Ovary (tissue), 10 donors: ENCODE measurements at regions of chr22 and their contacts with region 1.

Region 1: GRCh38 chr22:45473691-45474491 is 28.8 kb upstream of the FBLN1 start:
- DNase-seq: peak in 4 of 5 donors; percentile 11 to 58 (median 41)
- H3K4me3 ChIP-seq: no peak overlapping the region
- H3K27ac ChIP-seq: no peak overlapping the region
- H3K4me1 ChIP-seq: peaks cover 7% of the 10 kb centered on the region
- H3K27me3 ChIP-seq: no peaks in the 10 kb centered on the region
- CTCF ChIP-seq: no peak
- EP300 ChIP-seq: no peak
- POLR2A ChIP-seq: no peak

Region 2: GRCh38 chr22:43862074-43862881 is 1611.6 kb before region 1 on chr22 and contains the start of gene SULT4A1:
- intact Hi-C with region 1: no loop called
- DNase-seq: peak in 3 of 5 donors; percentile 29 to 59 (median 47)
- H3K4me3 ChIP-seq: no peak within 1 kb of the TSS
- H3K27ac ChIP-seq: no peak within 1 kb of the TSS
- H3K4me1 ChIP-seq: no peaks in the 10 kb centered on the region
- H3K27me3 ChIP-seq: no peaks in the 10 kb centered on the region
- CTCF ChIP-seq: no peak
- EP300 ChIP-seq: no peak
- POLR2A ChIP-seq: no peak
- total RNA-seq, gene SULT4A1: 0.36 to 3.5 (median 1.8) TPM

Region 3: DNA sequence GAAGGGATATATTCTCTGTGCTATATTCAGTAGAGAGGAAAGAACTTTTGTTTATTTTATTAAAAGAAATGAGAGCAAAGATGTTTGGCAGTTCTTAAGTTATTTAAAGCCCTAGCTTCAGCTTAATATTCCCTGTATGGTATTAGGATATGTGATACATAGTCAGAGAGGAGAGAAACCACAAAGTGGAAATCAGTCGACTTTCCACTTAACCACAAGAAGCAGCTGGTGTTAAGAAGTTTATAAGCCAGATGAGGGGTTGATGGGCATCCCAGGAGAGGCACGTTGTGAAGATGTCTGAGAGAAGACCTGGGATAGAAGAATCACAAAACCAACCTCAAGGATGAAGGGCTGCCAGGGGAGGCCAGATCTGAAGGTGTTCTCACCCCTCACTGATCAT is 440.8 kb before region 1 on chr22:
- intact Hi-C with region 1: no loop called
- DNase-seq: no peak
- H3K4me3 ChIP-seq: no peak overlapping the region
- H3K27ac ChIP-seq: no peak overlapping the region
- H3K4me1 ChIP-seq: peaks cover 13% of the 10 kb centered on the region
- H3K27me3 ChIP-seq: no peaks in the 10 kb centered on the region
- CTCF ChIP-seq: no peak
- EP300 ChIP-seq: no peak
- POLR2A ChIP-seq: no peak

Region 4: DNA sequence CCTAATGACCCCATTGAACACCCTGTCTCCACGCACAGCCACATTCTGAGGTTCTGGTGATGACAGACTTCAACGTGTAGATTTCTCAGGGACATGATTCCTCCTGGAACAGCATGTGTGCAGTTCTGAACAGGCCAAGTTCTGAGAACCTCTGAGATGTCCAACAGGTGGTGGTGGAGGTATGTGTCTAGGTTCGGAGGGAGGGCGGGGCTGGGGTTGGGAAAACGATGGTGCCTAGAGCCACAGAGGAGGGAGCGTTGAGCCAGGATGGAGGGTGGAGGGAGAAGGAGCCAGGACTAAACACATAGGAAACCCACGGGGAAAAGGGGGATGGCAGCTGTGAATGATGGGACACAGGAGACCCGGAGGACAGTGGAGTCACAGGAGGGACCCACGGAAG is 14.6 kb before region 1 on chr22:
- intact Hi-C with region 1: loop called in 1 of 4 experiments (anchors 2 kb)
- DNase-seq: peak in 1 of 5 donors; percentile 11
- H3K4me3 ChIP-seq: no peak overlapping the region
- H3K27ac ChIP-seq: peak overlapping the region in 1 of 2 donors; percentile 66
- H3K4me1 ChIP-seq: peaks cover 4% of the 10 kb centered on the region
- H3K27me3 ChIP-seq: no peaks in the 10 kb centered on the region
- CTCF ChIP-seq: no peak
- EP300 ChIP-seq: no peak
- POLR2A ChIP-seq: no peak